Activated CD4-positive, alpha-beta memory T cell treated with anti-CD3 and anti-CD28 coated beads for 36 hours (primary cell): ENCODE measurements at regions of chr10 and their contacts with region 1.

Region 1: DNA sequence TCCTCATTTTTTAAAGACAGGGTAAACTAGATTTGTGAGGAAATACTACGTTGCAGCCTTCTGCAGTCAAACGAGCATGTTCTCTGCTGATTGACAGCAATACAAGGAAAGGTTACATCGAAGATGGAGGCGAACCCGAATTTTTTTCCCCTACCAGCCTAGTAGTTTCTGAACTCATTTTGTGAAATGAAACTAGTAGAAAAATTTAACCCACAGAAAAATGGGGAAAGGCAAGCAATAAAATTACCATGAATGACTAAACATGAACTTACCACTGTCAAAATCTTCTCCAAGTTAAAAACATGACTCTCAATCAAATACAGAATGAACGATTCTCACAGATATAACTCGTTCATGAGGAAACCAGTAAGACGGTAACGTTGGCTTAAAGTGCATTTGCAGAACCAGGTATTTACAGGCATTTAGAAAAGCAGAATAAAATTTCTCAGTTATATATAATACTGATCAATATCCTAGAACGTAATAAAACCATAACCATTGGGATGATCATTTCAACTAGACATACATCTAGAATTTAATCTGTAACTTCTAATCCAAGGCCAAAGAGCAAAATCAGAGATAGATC is 73.9 kb downstream of the CELF2 start:
- DNase-seq: peak; percentile 44
- H3K4me3 Mint-ChIP-seq: no peak overlapping the region
- H3K27ac Mint-ChIP-seq: no peak overlapping the region
- H3K4me1 Mint-ChIP-seq: peaks cover 12% of the 10 kb centered on the region
- H3K27me3 Mint-ChIP-seq: peaks cover 6% of the 10 kb centered on the region

Region 2: DNA sequence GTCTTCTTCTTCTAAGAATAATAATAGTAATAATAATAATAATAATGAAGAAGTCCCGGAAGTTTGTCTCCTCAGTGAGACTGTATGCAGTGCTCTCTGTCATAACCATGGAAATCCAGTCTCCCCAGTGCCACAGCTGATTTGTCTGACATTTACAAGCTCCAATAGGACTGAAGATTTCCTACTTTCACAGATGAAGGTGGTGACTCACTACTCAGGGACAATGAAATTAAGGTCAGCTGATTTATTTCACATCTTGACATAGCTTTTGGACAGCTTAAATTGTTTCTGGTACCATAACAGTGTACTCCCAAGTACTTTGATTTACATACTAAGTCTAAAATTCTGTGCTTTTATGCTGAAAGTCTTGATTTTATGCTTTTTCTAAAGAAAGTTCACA is 67.0 kb before region 1 on chr10:
- CTCF ChIA-PET with region 1: no interaction called
- POLR2A ChIA-PET with region 1: no interaction called
- intact Hi-C with region 1: loop called (anchors 5 kb)
- DNase-seq: no peak
- H3K4me3 Mint-ChIP-seq: no peak overlapping the region
- H3K27ac Mint-ChIP-seq: no peak overlapping the region
- H3K4me1 Mint-ChIP-seq: peaks cover 10% of the 10 kb centered on the region
- H3K27me3 Mint-ChIP-seq: peaks cover 27% of the 10 kb centered on the region